ENCODE measurements at regions of chr12 and their contacts with region 1.

Region 1: GRCh38 chr12:132828706-132829534 is at the start of gene GOLGA3:
- DNase-seq: peak; percentile 96
- ATAC-seq: peak; percentile 86
- H3K4me3 Mint-ChIP-seq: peak within 1 kb of the TSS; percentile 94
- H3K27ac Mint-ChIP-seq: peak within 1 kb of the TSS; percentile 100
- H3K4me1 Mint-ChIP-seq: peaks cover 53% of the 10 kb centered on the region
- H3K27me3 Mint-ChIP-seq: no peaks in the 10 kb centered on the region
- CTCF ChIP-seq: no peak
- total RNA-seq, gene GOLGA3: 52.2 to 55.6 TPM

Region 2: DNA sequence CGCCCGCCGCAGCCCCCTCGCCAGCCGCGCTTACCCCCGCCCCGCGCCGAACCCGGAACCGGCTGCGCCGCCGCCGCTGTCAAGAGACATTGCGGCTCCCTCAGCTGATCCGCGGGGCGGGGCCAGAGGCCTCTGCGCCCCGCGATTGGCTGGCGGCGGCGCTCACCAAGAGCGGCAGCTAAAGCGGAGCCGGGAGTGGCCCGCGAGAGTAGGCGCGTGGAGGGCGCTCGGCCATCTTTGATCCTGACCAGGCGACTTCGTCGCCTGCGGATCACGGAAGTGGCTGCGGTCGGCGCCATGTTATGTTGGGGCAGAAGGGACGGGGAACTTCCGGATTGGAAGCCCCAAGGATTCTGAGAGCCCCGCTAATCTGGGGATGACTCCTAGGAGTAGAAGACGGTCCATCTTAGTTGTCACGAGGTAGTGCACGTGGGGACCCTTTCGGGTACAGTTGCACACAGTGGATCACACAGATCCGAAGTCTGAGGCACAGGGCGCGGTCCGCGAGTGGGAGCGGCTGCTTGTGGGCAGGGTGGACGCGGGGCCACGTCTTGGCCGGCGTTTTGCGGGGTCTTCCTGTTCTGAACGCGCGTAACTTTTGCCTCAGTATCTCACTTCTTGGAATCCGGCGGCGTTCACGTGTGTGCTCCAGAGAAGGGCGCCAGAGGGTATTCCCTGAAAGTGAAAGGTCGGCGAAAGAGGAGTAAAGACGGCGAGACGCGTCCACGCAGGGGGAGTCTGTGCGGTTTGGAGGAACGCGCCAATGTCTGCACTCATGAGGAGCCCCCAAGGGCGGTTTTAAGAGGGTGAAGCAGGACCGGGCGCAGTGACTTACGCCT is 58.8 kb after region 1 on chr12 and contains the start of gene CHFR:
- CTCF ChIA-PET with region 1: no interaction called
- POLR2A ChIA-PET with region 1: interaction called, 3 read pairs
- intact Hi-C with region 1: loop called (anchors 5 kb)
- DNase-seq: peak; percentile 97
- ATAC-seq: peak; percentile 99
- H3K4me3 Mint-ChIP-seq: peak within 1 kb of the TSS; percentile 97
- H3K27ac Mint-ChIP-seq: peak within 1 kb of the TSS; percentile 100
- H3K4me1 Mint-ChIP-seq: peaks cover 24% of the 10 kb centered on the region
- H3K27me3 Mint-ChIP-seq: no peaks in the 10 kb centered on the region
- CTCF ChIP-seq: no peak
- total RNA-seq, gene CHFR: 40.5 to 51.2 TPM

Region 3: DNA sequence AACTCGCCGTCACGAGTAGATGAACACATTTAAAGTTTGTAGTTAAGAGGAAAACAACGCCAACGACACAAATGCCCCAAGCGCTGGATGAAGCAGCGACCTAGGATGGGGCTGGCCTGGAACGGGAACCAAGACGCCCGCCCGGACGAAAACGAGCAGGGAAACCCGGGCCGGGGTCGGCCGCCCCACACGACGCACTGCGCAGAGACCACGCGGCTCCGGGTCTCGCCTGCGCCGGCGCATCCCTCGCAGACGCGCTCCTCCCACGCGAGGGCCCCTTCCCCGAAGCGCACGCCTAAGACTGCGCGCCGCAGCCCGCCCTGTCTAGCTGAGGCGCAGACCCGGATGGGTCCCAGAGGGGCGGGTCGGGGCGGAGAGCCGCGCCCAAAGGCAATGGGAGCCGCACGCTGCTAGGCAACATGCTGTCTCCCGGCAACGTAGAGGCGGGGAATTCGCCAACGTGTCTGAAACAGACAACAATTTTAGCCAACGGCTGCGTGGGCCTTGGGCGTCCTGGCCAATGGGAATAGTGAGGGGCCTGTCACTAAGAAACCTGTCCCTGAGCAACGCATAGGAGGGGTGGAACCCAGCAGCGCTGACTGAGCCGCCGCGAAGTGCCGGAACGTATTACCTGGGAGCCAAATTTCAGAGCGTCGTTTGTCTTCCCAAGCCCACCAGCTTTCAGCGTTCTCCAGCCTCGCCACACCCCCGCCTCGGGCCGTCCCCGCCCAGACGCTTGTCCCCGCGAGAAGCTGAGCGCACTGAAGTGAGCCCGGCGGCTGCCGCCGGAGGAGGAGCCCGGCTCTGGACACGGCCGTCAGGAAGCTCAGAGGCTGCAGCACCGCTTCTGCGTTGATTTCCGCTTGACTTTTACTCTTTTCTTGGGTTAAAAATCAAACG is 79.5 kb after region 1 on chr12:
- CTCF ChIA-PET with region 1: interaction called, 16 read pairs
- POLR2A ChIA-PET with region 1: no interaction called
- intact Hi-C with region 1: loop called (anchors 5 kb)
- DNase-seq: peak; percentile 98
- ATAC-seq: peak; percentile 91
- H3K4me3 Mint-ChIP-seq: peak overlapping the region; percentile 79
- H3K27ac Mint-ChIP-seq: peak overlapping the region; percentile 86
- H3K4me1 Mint-ChIP-seq: peaks cover 13% of the 10 kb centered on the region
- H3K27me3 Mint-ChIP-seq: peaks cover 6% of the 10 kb centered on the region
- CTCF ChIP-seq: no peak

Region 4: GRCh38 chr12:133256321-133256720 is 427.4 kb after region 1 on chr12:
- CTCF ChIA-PET with region 1: no interaction called
- POLR2A ChIA-PET with region 1: no interaction called
- intact Hi-C with region 1: no loop called
- DNase-seq: no peak
- ATAC-seq: no peak
- H3K4me3 Mint-ChIP-seq: no peak overlapping the region
- H3K27ac Mint-ChIP-seq: no peak overlapping the region
- H3K4me1 Mint-ChIP-seq: no peaks in the 10 kb centered on the region
- H3K27me3 Mint-ChIP-seq: peaks cover 7% of the 10 kb centered on the region
- CTCF ChIP-seq: no peak

Measured in activated CD8-positive, alpha-beta T cell treated with anti-CD3 and anti-CD28 coated beads for 36 hours (primary cell).